ENCODE measurements at regions of chr1 and their contacts with region 1.

Region 1: DNA sequence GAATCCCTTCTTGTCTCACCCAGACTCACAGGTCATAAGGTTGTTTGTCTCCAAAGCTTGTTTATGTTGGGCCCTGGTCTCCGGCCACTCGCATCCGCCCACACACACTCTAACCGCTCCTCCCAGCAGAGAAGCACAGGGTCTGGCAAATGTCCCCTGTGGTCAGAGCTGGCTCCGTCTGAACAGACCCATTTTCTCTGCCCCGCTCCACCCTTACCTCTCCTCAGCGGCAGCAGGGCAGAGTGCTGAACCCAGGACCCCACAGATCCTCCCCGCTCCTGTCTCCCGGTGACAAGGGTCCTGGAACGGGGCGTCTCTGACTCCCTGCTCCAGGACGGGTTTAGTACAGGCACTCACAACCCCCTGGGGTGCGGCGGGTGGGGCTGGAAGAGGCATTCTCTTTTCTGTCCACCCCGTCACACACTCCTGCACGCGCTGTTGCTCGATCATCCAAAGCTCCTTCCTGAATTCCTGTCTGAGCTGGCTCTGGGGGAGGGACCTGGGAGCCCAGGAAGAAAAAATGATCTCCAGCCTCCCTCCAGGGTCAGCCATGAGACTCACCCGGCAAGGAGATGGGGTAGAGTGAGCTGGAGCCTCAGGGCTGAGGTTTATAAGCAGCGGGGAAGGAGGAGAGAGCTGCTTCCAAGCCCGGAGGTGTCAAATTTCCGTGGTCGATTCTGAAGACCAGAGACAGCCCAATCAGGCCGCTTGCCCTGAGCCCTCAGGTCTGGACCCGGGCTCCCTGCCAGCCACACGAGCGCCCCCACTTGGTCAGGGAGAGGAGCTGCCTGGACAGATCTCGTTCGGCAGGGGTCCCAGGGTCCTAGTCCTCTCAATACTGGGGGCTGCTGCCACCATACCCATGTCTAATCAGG is at the start of gene S100A13:
- DNase-seq: peak; percentile 95
- ATAC-seq: peak; percentile 93
- H3K4me3 Mint-ChIP-seq: peak within 1 kb of the TSS; percentile 81
- H3K27ac Mint-ChIP-seq: peak within 1 kb of the TSS; percentile 93
- H3K4me1 Mint-ChIP-seq: peaks cover 56% of the 10 kb centered on the region
- H3K27me3 Mint-ChIP-seq: no peaks in the 10 kb centered on the region
- CTCF ChIP-seq: peak; percentile 72; the same call in 1 of the 2 replicates
- total RNA-seq, gene S100A13: 68.4 to 84.2 TPM (median 73.9 TPM) in 3 replicates

Region 2: DNA sequence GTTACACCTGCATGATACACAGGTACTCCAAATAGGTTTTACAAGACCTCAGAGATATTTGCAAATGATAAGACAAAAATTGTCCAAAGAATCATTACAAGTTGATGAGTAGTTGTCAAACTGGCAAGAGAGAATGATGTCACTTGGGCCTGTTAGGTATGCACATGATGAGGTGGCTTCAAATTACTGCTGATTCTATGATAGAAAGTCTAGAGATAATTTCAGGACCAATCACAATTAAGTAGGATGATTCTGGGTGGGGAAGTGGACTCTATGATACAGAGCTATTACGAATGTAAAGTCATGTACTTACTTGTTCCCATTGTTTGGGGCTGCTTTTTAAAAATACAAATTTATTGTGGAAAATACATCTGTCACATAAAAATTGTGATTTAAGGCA is 601.4 kb before region 1 on chr1:
- CTCF ChIA-PET with region 1: no interaction called
- POLR2A ChIA-PET with region 1: no interaction called
- DNase-seq: no peak
- ATAC-seq: no peak
- H3K4me3 Mint-ChIP-seq: no peak overlapping the region
- H3K27ac Mint-ChIP-seq: no peak overlapping the region
- H3K4me1 Mint-ChIP-seq: peaks cover 26% of the 10 kb centered on the region
- H3K27me3 Mint-ChIP-seq: no peaks in the 10 kb centered on the region
- CTCF ChIP-seq: no peak

Region 3: GRCh38 chr1:153343811-153344530 is 283.2 kb before region 1 on chr1:
- CTCF ChIA-PET with region 1: no interaction called
- POLR2A ChIA-PET with region 1: no interaction called
- DNase-seq: no peak
- ATAC-seq: no peak
- H3K4me3 Mint-ChIP-seq: no peak overlapping the region
- H3K27ac Mint-ChIP-seq: no peak overlapping the region
- H3K4me1 Mint-ChIP-seq: peaks cover 9% of the 10 kb centered on the region
- H3K27me3 Mint-ChIP-seq: peaks cover 3% of the 10 kb centered on the region
- CTCF ChIP-seq: no peak

Region 4: GRCh38 chr1:153465811-153466636 is 161.1 kb before region 1 on chr1:
- CTCF ChIA-PET with region 1: interaction called, 11 read pairs
- POLR2A ChIA-PET with region 1: no interaction called
- DNase-seq: peak; percentile 82
- ATAC-seq: peak; percentile 82
- H3K4me3 Mint-ChIP-seq: peak overlapping the region; percentile 41
- H3K27ac Mint-ChIP-seq: peak overlapping the region; percentile 48; the same call in 1 of the 2 replicates
- H3K4me1 Mint-ChIP-seq: peaks cover 29% of the 10 kb centered on the region
- H3K27me3 Mint-ChIP-seq: peaks cover 11% of the 10 kb centered on the region
- CTCF ChIP-seq: peak; percentile 88

Region 5: GRCh38 chr1:153520230-153520629 is 106.9 kb before region 1 on chr1:
- CTCF ChIA-PET with region 1: interaction called, 18 read pairs
- POLR2A ChIA-PET with region 1: no interaction called
- DNase-seq: no peak
- ATAC-seq: no peak
- H3K4me3 Mint-ChIP-seq: no peak overlapping the region; the same call in 1 of the 2 replicates
- H3K27ac Mint-ChIP-seq: no peak overlapping the region
- H3K4me1 Mint-ChIP-seq: peaks cover 22% of the 10 kb centered on the region
- H3K27me3 Mint-ChIP-seq: peaks cover 64% of the 10 kb centered on the region
- CTCF ChIP-seq: no peak

Region 6: DNA sequence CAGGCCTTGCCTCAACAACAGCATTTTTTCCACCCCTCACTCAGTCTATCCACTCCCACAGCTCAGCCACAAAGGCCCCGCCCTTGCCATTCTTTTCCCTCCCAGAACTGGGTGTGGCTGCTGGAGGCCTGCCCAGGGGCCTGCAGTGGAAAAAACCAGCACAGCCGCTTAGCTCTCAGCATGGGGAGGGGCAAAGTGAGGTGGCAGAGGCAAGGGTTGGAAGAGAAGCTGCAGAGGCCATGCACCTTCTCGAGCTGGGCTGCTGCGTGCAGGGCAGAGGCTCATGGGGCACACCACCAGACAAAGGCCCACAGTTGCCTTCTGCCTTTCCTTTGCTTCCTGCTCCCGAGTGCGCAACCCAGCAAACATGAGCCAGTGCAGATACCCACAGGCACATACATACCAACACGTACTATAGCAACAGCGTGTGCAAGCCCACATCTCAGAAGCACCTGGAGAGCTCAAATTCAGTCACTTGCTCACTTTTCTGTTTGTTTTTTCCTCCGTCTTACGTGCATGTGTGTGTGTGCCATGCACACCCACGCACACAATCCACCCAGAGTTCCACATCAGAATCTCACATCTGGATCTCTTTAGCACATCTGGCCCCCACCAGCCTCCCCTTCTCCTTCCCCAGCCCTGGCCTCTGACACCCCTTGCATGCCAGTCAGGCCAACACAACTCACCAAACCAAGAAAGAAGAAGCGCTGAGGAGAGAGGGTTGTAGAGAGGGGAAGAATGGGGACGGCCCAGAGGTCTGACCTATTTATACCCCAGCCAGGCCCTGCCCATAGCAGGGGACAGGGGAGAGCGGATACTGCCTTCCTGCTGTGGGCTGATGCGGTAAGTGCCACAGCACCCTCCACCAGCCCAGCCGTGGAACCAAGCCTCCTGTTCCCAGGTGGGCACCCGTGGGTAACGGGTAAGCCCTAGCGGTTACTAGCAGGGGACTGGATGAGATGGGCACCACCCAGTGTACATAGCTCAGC is 81.8 kb before region 1 on chr1 and contains the start of gene S100A4:
- CTCF ChIA-PET with region 1: interaction called, 20 read pairs
- POLR2A ChIA-PET with region 1: no interaction called
- DNase-seq: peak; percentile 88
- ATAC-seq: peak; percentile 89
- H3K4me3 Mint-ChIP-seq: peak within 1 kb of the TSS; percentile 64
- H3K27ac Mint-ChIP-seq: peak within 1 kb of the TSS; percentile 96
- H3K4me1 Mint-ChIP-seq: peaks cover 65% of the 10 kb centered on the region
- H3K27me3 Mint-ChIP-seq: no peaks in the 10 kb centered on the region; the same call in 1 of the 2 replicates
- CTCF ChIP-seq: no peak
- total RNA-seq, gene S100A4: 22.7 to 32.0 TPM (median 31.7 TPM) in 3 replicates

Region 7: DNA sequence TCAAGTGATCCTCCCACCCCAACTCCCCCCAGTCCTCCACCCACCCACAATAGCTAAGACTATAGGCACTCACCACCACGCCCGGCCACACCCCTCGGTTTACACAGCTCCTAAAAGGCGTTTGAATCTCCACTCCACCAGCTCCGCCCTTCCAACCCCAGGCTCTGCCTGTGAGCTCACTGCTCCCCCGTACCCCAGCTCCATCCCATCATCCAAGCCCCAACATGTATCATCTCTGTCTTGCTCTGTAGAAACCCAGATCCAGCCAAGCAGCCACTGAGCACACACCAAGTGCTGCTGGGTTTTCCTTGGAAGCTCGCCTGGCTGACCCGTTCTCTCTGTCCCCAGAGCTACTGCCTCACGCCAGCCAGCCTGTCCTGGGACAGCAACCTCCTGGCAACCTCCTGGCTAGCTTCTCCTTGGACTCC is 49.5 kb before region 1 on chr1:
- CTCF ChIA-PET with region 1: interaction called, 98 read pairs
- POLR2A ChIA-PET with region 1: interaction called, 5 read pairs
- DNase-seq: no peak
- ATAC-seq: no peak
- H3K4me3 Mint-ChIP-seq: no peak overlapping the region
- H3K27ac Mint-ChIP-seq: no peak overlapping the region
- H3K4me1 Mint-ChIP-seq: peaks cover 16% of the 10 kb centered on the region
- H3K27me3 Mint-ChIP-seq: 0 out of 2 replicates have a peak, but pooled peaks cover 2% of the 10 kb centered on the region
- CTCF ChIP-seq: no peak

Region 8: GRCh38 chr1:153649863-153650235 is 22.7 kb after region 1 on chr1:
- CTCF ChIA-PET with region 1: interaction called, 12 read pairs
- POLR2A ChIA-PET with region 1: interaction called, 4 read pairs
- DNase-seq: no peak
- ATAC-seq: no peak
- H3K4me3 Mint-ChIP-seq: no peak overlapping the region
- H3K27ac Mint-ChIP-seq: no peak overlapping the region
- H3K4me1 Mint-ChIP-seq: peaks cover 8% of the 10 kb centered on the region
- H3K27me3 Mint-ChIP-seq: peaks cover 2% of the 10 kb centered on the region; the same call in 1 of the 2 replicates
- CTCF ChIP-seq: no peak

Region 9: DNA sequence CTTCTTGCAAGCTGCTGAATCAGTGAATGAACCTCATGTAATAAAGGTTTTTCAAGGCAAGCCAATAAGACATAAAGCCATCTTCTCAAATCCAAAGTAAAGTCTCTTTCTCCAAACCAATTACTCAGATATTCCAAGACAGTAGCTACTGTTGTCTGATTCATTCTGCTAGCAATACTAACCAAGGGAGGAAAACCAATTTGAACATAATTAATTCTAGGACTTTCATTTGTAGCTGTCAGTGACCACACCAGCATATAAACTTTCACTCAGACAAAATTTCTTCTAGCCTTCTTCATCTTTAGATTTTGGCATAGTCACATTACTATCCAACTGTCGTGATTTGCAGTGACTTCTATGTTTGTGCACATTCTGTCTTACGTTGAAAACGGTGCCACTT is 90.2 kb after region 1 on chr1:
- CTCF ChIA-PET with region 1: no interaction called
- POLR2A ChIA-PET with region 1: no interaction called
- DNase-seq: no peak
- ATAC-seq: no peak
- H3K4me3 Mint-ChIP-seq: no peak overlapping the region
- H3K27ac Mint-ChIP-seq: no peak overlapping the region
- H3K4me1 Mint-ChIP-seq: peaks cover 7% of the 10 kb centered on the region; the same call in 1 of the 2 replicates
- H3K27me3 Mint-ChIP-seq: no peaks in the 10 kb centered on the region; the same call in none of the 2 replicates
- CTCF ChIP-seq: no peak

Measured in WTC11 (cell line).